GM13976 (cell line): ENCODE measurements at regions of chr5 and their contacts with region 1.

Region 1: GRCh38 chr5:14351845-14352712 is 208.9 kb downstream of the TRIO start:
- DNase-seq: peak; percentile 80
- CTCF ChIP-seq: peak; percentile 96

Region 2: GRCh38 chr5:14054965-14055963 is 296.8 kb before region 1 on chr5:
- in situ Hi-C with region 1: no loop called
- DNase-seq: no peak
- CTCF ChIP-seq: no peak

Region 3: GRCh38 chr5:14628346-14628745 is 276.3 kb after region 1 on chr5:
- in situ Hi-C with region 1: loop called (anchors 25 kb)
- DNase-seq: peak; percentile 41
- CTCF ChIP-seq: no peak